CD14-positive monocyte (primary cell): ENCODE measurements at regions of chr3 and their contacts with region 1.

Region 1: DNA sequence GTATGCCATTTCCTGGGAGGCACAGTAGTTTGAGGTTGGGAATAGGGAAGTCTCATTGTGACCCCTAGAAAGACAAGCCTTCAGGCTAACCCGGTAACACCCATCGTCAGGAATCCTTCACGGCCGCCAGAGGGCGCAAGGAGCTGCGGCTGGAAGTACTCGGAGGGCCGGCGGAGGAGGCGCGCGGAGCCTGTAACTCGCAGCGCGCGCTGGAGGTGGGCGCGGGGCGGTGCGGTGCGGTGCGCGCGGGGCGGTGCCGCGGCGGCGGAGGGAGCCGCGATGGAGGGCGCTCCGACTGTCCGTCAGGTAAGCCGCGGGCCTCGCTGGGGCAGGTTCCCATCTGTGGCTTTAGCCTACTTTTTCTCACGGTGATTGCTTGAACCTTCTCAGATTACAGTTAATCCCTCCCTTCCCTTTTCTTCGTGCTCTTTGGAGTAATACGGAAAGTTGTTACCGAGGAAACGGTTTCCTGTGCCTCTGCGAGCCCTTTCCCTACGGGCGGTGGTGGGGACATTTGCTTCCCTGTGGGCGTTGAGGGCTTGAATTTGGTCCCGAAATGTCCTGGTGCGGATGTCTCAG is at the start of gene GRAMD1C:
- DNase-seq: peak; percentile 76 to 89 (median 82)
- H3K4me3 ChIP-seq: peak within 1 kb of the TSS; percentile 41 to 78 (median 51)
- H3K4me3 Mint-ChIP-seq: peak within 1 kb of the TSS; percentile 80 to 94
- H3K27ac ChIP-seq: no peak within 1 kb of the TSS
- H3K27ac Mint-ChIP-seq: peak within 1 kb of the TSS in 4 of 7 donors; percentile 19 to 78 (median 48)
- H3K4me1 ChIP-seq: peaks cover 18 to 22% of the 10 kb centered on the region in 2 donors
- H3K4me1 Mint-ChIP-seq: peaks cover 16% of the 10 kb centered on the region
- H3K27me3 ChIP-seq: peaks cover 0 to 6% of the 10 kb centered on the region in 2 donors
- H3K27me3 Mint-ChIP-seq: peaks cover 0 to 10% (median 7%) of the 10 kb centered on the region in 3 donors
- CTCF ChIP-seq: peak; percentile 84
- polyA plus RNA-seq, gene GRAMD1C: 0.13 to 0.29 (median 0.27) TPM

Region 2: GRCh38 chr3:113634782-113635474 is 203.8 kb before region 1 on chr3:
- intact Hi-C with region 1: no loop called
- DNase-seq: no peak
- H3K4me3 ChIP-seq: no peak overlapping the region
- H3K4me3 Mint-ChIP-seq: no peak overlapping the region
- H3K27ac ChIP-seq: no peak overlapping the region
- H3K27ac Mint-ChIP-seq: no peak overlapping the region
- H3K4me1 ChIP-seq: peaks cover 6 to 10% of the 10 kb centered on the region in 2 donors
- H3K4me1 Mint-ChIP-seq: peaks cover 12% of the 10 kb centered on the region
- H3K27me3 ChIP-seq: no peaks in the 10 kb centered on the region
- H3K27me3 Mint-ChIP-seq: peaks cover 0 to 4% (median 0%) of the 10 kb centered on the region in 3 donors
- CTCF ChIP-seq: no peak

Region 3: GRCh38 chr3:113736548-113737089 is 102.1 kb before region 1 on chr3:
- intact Hi-C with region 1: loop called in 1 of 2 experiments (anchors 5 kb)
- DNase-seq: peak; percentile 54 to 72 (median 60)
- H3K4me3 ChIP-seq: no peak overlapping the region
- H3K4me3 Mint-ChIP-seq: no peak overlapping the region
- H3K27ac ChIP-seq: peak overlapping the region in 1 of 2 donors; percentile 30
- H3K27ac Mint-ChIP-seq: peak overlapping the region; percentile 11 to 79 (median 47)
- H3K4me1 ChIP-seq: peaks cover 0 to 4% of the 10 kb centered on the region in 2 donors
- H3K4me1 Mint-ChIP-seq: peaks cover 12% of the 10 kb centered on the region
- H3K27me3 ChIP-seq: no peaks in the 10 kb centered on the region
- H3K27me3 Mint-ChIP-seq: no peaks in the 10 kb centered on the region
- CTCF ChIP-seq: peak; percentile 80

Region 4: GRCh38 chr3:114056130-114057010 is 217.7 kb after region 1 on chr3 and contains the starts of genes CCDC191 and QTRT2:
- intact Hi-C with region 1: loop called in 1 of 2 experiments (anchors 10 kb)
- DNase-seq: peak; percentile 99 to 100 (median 99)
- H3K4me3 ChIP-seq: peak within 1 kb of the TSS; percentile 89 to 96 (median 93)
- H3K4me3 Mint-ChIP-seq: peak within 1 kb of the TSS; percentile 91 to 99
- H3K27ac ChIP-seq: peak within 1 kb of the TSS; percentile 70 to 97
- H3K27ac Mint-ChIP-seq: peak within 1 kb of the TSS; percentile 97 to 99 (median 98)
- H3K4me1 ChIP-seq: peaks cover 35 to 43% of the 10 kb centered on the region in 2 donors
- H3K4me1 Mint-ChIP-seq: peaks cover 43% of the 10 kb centered on the region
- H3K27me3 ChIP-seq: no peaks in the 10 kb centered on the region
- H3K27me3 Mint-ChIP-seq: peaks cover 0 to 2% (median 0%) of the 10 kb centered on the region in 3 donors
- CTCF ChIP-seq: no peak
- polyA plus RNA-seq, gene CCDC191: 0.48 to 2.9 (median 1.2) TPM
- polyA plus RNA-seq, gene QTRT2: 14.5 to 16.7 (median 15.9) TPM

Region 5: GRCh38 chr3:114093596-114093995 is 254.9 kb after region 1 on chr3:
- intact Hi-C with region 1: loop called in 1 of 2 experiments (anchors 5 kb)
- DNase-seq: peak; percentile 17 to 35 (median 28)
- H3K4me3 ChIP-seq: no peak overlapping the region
- H3K4me3 Mint-ChIP-seq: no peak overlapping the region
- H3K27ac ChIP-seq: no peak overlapping the region
- H3K27ac Mint-ChIP-seq: peak overlapping the region; percentile 19 to 97 (median 75)
- H3K4me1 ChIP-seq: peaks cover 26 to 29% of the 10 kb centered on the region in 2 donors
- H3K4me1 Mint-ChIP-seq: peaks cover 28% of the 10 kb centered on the region
- H3K27me3 ChIP-seq: no peaks in the 10 kb centered on the region
- H3K27me3 Mint-ChIP-seq: peaks cover 1 to 4% (median 2%) of the 10 kb centered on the region in 3 donors
- CTCF ChIP-seq: no peak